K562 (cell line): ENCODE measurements at regions of chr1 and their contacts with region 1.

Region 1: GRCh38 chr1:24384251-24385090 is 29.1 kb downstream of the STPG1 start:
- DNase-seq: no peak
- ATAC-seq: no peak
- H3K4me3 ChIP-seq: no peak overlapping the region
- H3K27ac ChIP-seq: no peak overlapping the region
- H3K4me1 ChIP-seq: no peaks in the 10 kb centered on the region
- H3K27me3 ChIP-seq: peaks cover 0 to 17% of the 10 kb centered on the region in 2 experiments; a peak in 3 of 5 replicates
- CTCF ChIP-seq: no peak
- EP300 ChIP-seq: no peak
- POLR2A ChIP-seq: no peak
- RAD21 ChIP-seq: no peak

Region 2: GRCh38 chr1:24308365-24309015 is 76.0 kb before region 1 on chr1:
- CTCF ChIA-PET with region 1: no interaction called
- POLR2A ChIA-PET with region 1: no interaction called
- in situ Hi-C with region 1: loop called (anchors 5 kb)
- intact Hi-C with region 1: no loop called
- DNase-seq: peak in 1 of 4 experiments; percentile 21
- ATAC-seq: peak; percentile 70
- H3K4me3 ChIP-seq: no peak overlapping the region
- H3K27ac ChIP-seq: no peak overlapping the region
- H3K4me1 ChIP-seq: peaks cover 6 to 13% of the 10 kb centered on the region in 2 experiments; a peak in 3 of 5 replicates
- H3K27me3 ChIP-seq: peaks cover 9 to 16% of the 10 kb centered on the region in 2 experiments; a peak in 4 of 5 replicates
- CTCF ChIP-seq: peak; percentile 35 to 44 (median 36); a peak in 4 of 6 replicates
- EP300 ChIP-seq: no peak
- POLR2A ChIP-seq: no peak
- RAD21 ChIP-seq: peak in 1 of 2 experiments; percentile 37; a peak in 3 of 4 replicates